ENCODE measurements at regions of chr20 and their contacts with region 1.

Region 1: DNA sequence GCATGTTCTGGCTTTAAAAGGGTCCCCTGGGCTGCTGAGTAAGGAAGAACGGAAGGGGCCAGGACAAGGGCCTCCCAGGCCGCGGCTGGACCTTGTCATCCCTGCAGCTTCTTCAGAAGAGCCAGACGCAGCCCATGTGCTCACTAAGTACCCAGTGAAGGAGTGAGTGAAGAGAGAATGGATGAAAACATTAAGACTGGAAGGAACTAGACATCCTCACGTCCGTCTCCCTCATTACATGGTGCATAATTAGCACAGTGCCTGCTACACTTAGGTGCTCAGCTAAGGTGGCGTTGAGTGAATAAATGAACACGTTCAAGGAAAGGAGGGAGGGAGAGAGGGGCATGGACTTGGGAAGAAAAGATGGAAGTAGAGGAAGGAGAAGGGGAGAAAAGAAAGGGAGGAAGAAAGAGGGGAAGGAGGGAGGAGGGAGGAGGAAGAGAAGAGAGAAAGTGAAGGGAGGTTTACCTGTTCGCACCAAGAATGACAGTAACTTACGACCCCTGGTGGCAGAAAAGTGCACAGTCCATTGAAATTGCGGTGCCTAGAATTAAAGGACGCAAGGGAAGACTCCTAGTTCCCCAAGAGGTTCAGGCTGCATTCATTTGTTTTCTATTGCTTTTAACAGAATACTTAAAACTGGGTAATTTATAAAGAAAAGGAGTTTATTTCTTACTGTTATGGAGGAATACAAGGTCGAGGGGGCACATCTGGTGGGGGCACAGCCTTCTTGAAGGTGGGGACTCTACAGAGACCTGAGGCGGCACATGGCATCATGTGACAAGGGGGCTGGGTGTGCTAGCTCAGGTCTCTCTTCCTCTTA is 8.0 kb downstream of the TP53RK start:
- DNase-seq: peak; percentile 68
- CTCF ChIP-seq: peak; percentile 87

Region 2: GRCh38 chr20:46347841-46348803 is 333.1 kb before region 1 on chr20:
- CTCF ChIA-PET with region 1: no interaction called
- POLR2A ChIA-PET with region 1: no interaction called
- DNase-seq: no peak
- CTCF ChIP-seq: no peak

Region 3: GRCh38 chr20:46520976-46521579 is 160.2 kb before region 1 on chr20:
- CTCF ChIA-PET with region 1: interaction called, 93 read pairs
- POLR2A ChIA-PET with region 1: no interaction called
- DNase-seq: peak; percentile 65
- CTCF ChIP-seq: peak; percentile 72

Region 4: DNA sequence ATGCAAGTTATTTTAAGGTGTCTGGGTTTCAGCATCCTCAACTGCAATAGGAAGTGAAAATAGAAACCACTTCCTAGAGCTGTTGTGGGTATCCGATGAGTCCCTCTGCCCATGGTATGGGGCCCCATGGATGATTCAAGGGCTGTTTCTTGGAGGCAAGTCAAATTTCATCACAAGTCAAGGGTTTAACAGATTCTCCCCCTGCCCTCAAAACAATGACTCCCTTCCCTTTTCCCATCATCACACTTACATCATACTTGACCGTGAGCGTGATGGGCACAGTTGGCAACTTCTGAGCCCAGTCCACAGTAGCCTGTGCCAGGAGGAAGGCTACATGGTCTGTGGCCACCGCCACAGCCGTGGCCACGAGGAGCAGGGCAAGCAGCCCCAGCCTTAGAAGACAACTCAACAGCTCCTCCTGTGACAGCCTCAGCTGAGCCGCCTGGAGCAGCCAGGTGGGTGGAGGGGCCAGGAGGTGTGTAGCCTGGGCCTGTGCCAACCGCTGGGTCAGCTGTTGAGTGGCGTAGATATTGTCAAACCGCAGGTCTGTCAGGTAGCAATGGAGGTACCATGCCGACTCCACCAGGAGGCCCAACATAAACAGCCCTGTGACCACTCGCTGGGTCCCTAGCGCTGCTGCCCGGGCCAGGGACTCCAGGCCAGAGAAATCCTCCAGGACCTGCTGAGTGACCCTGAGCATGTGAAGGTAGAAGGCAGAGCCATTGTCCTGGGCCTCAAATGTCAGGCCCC is 136.0 kb before region 1 on chr20:
- CTCF ChIA-PET with region 1: interaction called, 33 read pairs
- POLR2A ChIA-PET with region 1: no interaction called
- DNase-seq: no peak
- CTCF ChIP-seq: no peak

Region 5: DNA sequence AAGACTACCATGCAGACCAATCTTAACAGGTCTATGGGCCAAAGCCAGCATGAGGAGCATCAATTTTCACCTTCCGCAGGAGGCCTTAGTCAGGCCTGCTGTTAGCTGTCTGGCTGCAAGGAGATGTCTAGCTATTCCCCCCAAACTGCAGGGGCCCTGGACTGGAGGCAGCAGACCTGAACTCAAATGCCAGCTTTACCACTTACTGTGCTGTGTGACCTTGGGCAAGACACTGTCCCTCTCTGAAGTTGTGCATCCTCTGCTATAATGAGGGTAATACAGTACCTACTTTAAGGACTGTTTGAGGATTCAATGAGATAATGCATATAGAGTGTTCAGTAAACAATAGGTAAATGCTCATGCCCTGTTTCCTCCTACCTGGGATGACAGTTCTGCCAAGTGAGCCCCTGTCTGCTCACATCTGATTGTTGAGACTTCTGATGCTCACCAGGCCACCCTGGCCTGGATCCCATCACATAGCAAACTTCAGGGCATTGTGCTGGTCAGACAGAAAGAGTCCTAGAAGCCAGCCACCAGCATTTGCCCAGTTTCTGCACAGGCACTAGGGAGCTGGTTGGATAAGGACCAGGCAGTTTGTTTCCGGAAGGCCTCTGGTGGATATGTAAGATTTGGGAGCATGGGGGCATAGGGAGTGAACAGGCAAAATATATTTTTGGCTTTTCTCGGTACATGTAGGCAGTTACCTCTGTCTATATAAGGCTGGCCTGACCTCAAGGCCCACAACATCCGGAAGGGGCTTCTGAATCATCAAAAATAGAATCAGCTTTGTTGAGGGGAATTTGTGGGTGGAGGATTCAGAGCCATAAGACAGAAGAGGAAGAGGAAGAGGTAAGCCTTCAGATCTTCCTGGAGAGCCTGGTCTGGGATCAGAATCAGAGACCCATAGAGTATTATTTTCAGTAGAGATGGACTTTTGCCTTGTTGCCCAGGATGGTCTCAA is 128.5 kb before region 1 on chr20:
- CTCF ChIA-PET with region 1: interaction called, 15 read pairs
- POLR2A ChIA-PET with region 1: no interaction called
- DNase-seq: peak; percentile 73
- CTCF ChIP-seq: no peak

Region 6: DNA sequence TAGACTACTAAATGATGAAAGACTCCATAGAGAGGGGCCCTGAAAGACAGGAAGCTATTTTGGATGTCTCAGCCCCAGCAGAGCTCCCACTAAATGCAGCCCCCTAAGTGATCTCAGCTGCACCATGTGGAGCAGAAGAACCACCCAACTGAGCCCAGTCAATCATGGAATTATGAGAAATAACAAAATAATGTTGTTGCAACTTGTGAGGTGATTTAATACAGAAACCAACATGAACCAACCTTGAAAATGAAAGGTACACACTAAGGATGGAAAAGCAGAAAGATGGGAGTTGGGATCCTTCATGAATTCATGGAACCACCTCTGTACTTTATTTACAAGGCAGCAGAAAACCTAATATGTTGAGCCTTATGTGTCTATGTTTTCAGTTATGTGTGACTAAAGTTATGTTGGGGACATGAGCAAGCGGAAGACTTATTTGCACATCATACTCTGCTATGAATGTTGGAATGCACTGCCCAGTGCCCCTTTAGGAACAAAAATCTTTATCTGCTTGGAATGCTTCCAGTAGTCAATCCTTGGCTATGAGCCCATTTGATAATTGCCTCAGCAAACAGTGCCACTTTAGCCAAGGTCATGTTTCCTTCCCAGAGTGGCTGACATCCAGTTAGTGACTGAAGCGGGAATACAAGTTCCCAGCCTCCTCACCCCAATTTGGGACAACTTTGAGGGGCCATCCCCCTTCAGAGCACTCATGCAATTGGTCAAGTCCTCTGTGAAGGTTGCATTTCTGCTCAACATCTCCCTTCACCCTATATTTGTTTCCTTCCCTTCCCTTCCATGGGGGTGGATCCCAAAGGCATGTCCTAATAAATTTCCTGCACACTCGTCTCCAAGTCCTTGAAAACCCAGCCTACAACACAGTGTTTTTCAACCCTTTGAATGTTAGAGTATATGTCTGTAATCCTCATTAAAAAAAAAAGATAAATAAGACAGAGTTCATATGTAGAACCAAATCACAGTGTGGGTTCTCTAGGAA is 10.4 kb before region 1 on chr20:
- CTCF ChIA-PET with region 1: interaction called, 16 read pairs
- POLR2A ChIA-PET with region 1: no interaction called
- DNase-seq: no peak
- CTCF ChIP-seq: no peak

Region 7: GRCh38 chr20:46694494-46694893 is 13.3 kb after region 1 on chr20:
- CTCF ChIA-PET with region 1: interaction called, 17 read pairs
- POLR2A ChIA-PET with region 1: no interaction called
- DNase-seq: no peak
- CTCF ChIP-seq: no peak

Region 8: DNA sequence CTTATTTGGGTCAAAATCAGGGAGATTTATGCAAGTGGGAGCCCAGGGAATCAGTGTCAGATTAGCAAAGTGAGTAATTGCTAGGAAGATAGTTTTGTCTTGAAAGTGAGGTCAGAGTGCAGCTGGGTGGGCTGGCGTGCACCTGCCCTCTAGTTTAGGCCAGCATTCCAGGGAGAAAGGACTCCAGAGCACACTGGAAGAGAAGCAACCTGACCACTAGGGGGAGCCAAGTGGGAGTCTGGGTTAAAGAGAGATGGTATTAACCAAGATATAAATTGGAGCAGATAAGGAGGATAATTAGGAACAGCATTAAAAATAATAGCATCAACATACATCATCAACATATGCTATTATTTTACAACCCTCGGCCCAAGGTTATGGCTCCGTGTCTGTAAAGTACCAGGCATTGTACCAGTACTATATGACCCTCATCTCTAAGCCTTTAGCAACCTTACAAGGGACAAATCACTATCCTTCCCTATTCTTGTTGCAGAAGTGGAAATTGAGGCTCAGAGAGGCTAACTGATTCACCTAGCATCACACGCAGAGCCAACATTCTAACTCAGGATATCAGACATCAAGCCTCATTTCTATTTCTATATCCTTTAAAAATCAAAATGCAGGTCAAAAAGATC is 86.0 kb after region 1 on chr20:
- CTCF ChIA-PET with region 1: no interaction called
- POLR2A ChIA-PET with region 1: no interaction called
- DNase-seq: peak; percentile 39
- CTCF ChIP-seq: peak; percentile 47